Natural killer cell (primary cell): ENCODE measurements at regions of chr1 and their contacts with region 1.

Region 1: GRCh38 chr1:110460253-110461220 is 9.6 kb downstream of the PROK1 start:
- DNase-seq: peak; percentile 77 to 90
- ATAC-seq: peak; percentile 87 to 99 (median 98)
- H3K4me3 ChIP-seq: no peak overlapping the region
- H3K4me3 Mint-ChIP-seq: no peak overlapping the region
- H3K27ac ChIP-seq: no peak overlapping the region
- H3K27ac Mint-ChIP-seq: no peak overlapping the region
- H3K4me1 ChIP-seq: no peaks in the 10 kb centered on the region
- H3K4me1 Mint-ChIP-seq: no peaks in the 10 kb centered on the region
- H3K27me3 ChIP-seq: no peaks in the 10 kb centered on the region
- H3K27me3 Mint-ChIP-seq: peaks cover 0 to 5% of the 10 kb centered on the region in 2 donors
- CTCF ChIP-seq: peak; percentile 94

Region 2: DNA sequence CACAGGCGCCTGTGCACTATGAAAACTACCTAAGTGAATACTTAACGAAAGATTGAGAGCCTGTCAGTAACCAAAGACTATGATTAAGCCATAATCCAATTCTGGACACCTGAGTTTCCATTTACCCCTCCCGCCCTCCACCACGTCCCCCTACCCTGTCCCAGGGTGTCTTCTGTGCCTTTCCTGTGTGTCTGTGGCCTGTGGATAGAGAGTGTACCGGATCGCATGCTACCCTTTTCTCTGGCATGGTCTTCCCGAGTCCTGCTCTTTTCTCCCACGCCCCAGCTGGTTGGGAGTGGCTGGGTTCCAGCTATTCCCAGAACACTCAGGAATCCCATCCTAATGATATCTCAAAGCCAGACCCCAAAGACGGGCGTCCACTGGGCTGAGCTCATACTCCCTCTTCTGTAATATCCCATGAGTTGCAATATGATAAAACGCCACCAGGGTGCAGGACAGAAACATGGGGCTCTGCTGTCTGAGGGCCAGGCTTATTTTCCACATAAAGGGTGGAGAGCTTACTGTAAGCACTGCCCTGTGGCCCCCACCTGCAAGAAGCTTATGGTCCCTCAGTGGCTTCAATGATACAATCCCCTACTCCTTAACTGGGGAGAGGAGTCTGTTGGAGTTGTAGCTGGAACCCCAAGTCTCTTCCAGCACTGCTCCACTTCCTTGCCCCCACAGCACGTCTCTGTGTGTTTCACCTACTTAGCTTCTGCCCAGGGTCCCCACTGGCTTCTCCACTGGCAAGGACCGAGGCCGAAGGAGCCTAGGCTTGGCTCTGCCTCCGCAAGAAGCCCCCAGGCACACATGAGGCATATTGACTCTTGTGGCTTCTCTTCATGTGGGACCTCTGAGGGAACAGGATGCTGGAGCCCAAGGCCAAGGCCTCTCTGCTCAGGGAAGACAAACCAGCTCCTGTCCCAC is 372.5 kb before region 1 on chr1:
- intact Hi-C with region 1: loop called (anchors 10 kb)
- DNase-seq: peak in 1 of 2 donors; percentile 70
- ATAC-seq: peak; percentile 67 to 77 (median 75)
- H3K4me3 ChIP-seq: no peak overlapping the region
- H3K4me3 Mint-ChIP-seq: peak overlapping the region; percentile 21
- H3K27ac ChIP-seq: no peak overlapping the region
- H3K27ac Mint-ChIP-seq: no peak overlapping the region
- H3K4me1 ChIP-seq: peaks cover 13% of the 10 kb centered on the region
- H3K4me1 Mint-ChIP-seq: peaks cover 14 to 18% of the 10 kb centered on the region in 2 donors
- H3K27me3 ChIP-seq: peaks cover 13% of the 10 kb centered on the region
- H3K27me3 Mint-ChIP-seq: peaks cover 37 to 59% of the 10 kb centered on the region in 2 donors
- CTCF ChIP-seq: peak; percentile 53

Region 3: DNA sequence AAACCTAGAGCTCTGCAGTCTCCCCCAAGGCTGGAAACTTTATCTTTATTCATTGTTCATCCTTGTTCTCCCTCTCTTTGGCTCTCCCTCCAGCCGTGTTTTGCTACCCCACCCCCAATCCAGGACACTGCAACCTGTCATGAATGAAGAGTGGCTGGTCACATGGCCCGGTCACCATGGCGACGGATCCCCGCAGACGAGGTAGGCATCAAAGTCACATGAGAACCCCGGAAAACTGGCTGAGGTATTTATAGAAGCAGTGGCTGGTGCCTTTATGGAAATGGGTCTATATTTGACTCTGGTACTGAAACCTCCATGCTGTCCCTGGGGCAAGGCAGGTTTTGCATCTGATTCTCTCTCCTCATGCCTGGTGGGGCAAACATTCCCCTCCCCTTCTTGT is 323.6 kb before region 1 on chr1:
- intact Hi-C with region 1: no loop called
- DNase-seq: peak in 1 of 2 donors; percentile 43
- ATAC-seq: no peak
- H3K4me3 ChIP-seq: no peak overlapping the region
- H3K4me3 Mint-ChIP-seq: no peak overlapping the region
- H3K27ac ChIP-seq: no peak overlapping the region
- H3K27ac Mint-ChIP-seq: no peak overlapping the region
- H3K4me1 ChIP-seq: no peaks in the 10 kb centered on the region
- H3K4me1 Mint-ChIP-seq: peaks cover 0 to 10% of the 10 kb centered on the region in 2 donors
- H3K27me3 ChIP-seq: no peaks in the 10 kb centered on the region
- H3K27me3 Mint-ChIP-seq: peaks cover 46 to 49% of the 10 kb centered on the region in 2 donors
- CTCF ChIP-seq: no peak

Region 4: DNA sequence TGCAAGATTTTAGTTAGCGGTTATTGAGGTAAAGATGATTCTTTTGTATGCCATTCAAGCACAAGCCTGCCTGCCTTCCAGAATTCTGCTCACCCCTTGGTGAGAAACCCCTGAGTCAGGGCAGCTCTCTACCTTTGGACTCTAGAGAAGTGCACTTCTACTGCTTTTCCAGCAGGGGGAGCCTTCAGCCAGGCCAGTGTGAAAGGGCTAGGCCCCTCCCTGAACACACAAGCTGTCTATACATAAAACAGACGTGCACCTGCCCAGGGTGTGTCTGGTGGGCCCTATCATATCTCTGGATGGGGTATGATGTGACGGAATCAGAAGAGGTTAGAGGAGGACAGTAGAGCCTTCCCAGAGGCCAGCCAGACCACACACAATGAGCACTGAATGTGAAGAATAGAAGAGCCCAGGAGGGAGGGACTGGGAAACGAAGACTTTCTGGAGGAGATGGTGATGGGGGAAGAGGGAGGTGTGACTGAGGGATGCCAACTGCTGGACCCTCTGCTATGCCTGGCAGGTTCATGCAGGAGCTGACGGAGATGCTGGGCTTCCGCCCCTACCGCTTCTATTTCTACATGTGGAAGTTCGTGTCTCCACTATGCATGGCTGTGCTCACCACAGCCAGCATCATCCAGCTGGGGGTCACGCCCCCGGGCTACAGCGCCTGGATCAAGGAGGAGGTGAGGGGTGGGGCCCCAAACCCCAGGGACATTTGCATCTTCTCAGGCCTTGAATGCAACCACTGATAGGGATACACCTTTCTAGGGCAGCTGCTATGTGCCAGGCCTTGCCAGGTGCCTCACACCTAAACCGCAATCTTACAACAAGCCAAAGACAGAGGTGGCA is 263.4 kb before region 1 on chr1:
- intact Hi-C with region 1: loop called (anchors 1 kb)
- DNase-seq: peak in 1 of 2 donors; percentile 70
- ATAC-seq: peak; percentile 80 to 100 (median 94)
- H3K4me3 ChIP-seq: no peak overlapping the region
- H3K4me3 Mint-ChIP-seq: no peak overlapping the region
- H3K27ac ChIP-seq: no peak overlapping the region
- H3K27ac Mint-ChIP-seq: no peak overlapping the region
- H3K4me1 ChIP-seq: no peaks in the 10 kb centered on the region
- H3K4me1 Mint-ChIP-seq: peaks cover 4 to 5% of the 10 kb centered on the region in 2 donors
- H3K27me3 ChIP-seq: no peaks in the 10 kb centered on the region
- H3K27me3 Mint-ChIP-seq: no peaks in the 10 kb centered on the region
- CTCF ChIP-seq: peak; percentile 90

Region 5: DNA sequence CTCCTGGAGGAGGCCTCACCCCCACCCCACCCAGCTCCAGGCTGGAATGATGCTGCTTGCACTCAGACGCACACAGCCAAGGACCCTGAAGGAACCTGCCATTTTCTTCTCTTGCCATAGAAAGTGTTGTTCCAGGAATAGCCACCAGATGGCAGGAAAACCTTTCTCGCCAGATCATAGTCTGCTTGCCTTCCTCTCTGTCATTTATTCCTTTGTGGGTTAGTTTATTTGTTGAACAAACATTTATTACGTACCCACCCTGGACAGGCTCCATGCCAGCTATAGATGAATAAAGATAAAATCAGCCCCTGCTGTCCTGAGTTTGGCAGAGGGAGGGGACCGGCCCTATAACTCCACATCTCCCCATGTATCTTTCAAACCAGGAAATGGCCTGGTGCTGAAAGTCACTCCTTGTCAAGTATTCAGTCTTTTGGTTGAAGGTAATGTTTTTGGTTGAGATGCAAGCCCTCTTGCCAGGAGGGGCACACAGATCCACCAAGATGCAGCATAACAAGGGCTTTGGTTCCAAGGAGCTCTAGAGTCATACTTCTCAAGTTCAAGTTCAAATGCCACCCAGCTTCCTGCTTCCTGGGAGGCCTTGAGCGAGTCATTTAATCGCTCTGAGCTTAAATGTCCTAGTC is 257.4 kb before region 1 on chr1:
- intact Hi-C with region 1: loop called (anchors 1 kb)
- DNase-seq: peak; percentile 37 to 90
- ATAC-seq: peak; percentile 63 to 77 (median 68)
- H3K4me3 ChIP-seq: no peak overlapping the region
- H3K4me3 Mint-ChIP-seq: no peak overlapping the region
- H3K27ac ChIP-seq: no peak overlapping the region
- H3K27ac Mint-ChIP-seq: no peak overlapping the region
- H3K4me1 ChIP-seq: peaks cover 13% of the 10 kb centered on the region
- H3K4me1 Mint-ChIP-seq: peaks cover 5 to 15% of the 10 kb centered on the region in 2 donors
- H3K27me3 ChIP-seq: no peaks in the 10 kb centered on the region
- H3K27me3 Mint-ChIP-seq: no peaks in the 10 kb centered on the region
- CTCF ChIP-seq: peak; percentile 90

Region 6: DNA sequence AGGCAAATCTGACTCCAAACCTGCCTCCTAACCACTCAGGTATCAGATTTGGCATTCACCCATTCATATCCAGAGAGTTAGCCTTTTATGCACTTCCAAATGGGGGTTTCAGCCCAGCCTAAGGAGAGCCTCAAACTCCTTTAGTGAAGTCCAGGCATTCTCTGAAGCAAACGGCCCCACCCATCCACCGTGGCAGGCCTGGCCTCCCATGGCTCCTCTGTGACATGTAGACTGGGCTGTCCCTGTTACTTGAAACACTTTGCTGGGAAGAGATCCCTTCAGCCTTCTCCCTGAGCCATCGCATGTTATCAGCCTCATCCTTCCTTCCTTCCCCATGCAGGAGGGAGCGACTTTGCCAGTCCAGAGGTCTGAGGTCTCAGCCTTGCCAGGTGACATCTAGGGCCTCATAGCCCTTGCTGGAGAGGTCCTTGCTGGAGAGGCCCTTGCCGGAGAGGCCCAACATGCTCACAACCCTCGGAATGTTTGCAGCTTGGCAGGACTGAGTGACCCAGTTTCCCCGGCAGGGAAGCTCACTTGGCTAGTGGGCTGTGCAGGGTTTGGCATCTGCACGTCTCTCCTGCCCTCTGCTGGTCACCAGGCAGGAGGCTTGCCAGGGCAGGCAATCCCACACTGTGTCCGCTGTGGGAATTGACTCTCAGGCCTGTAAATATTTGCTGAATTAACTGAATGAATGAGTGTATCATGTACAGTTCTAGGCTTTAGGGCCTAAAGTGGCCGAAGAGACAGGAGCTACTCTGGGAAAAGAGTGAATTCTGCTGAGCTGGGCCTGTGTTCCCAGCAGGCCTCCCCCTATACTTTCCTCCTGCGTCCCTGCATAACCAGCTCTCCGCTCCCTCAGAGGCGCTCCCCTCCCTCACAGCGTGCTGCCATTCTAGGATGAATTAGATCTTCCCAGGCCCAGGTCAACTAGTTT is 148.1 kb before region 1 on chr1:
- intact Hi-C with region 1: loop called (anchors 2 kb)
- DNase-seq: peak; percentile 57 to 87
- ATAC-seq: peak; percentile 85 to 98 (median 98)
- H3K4me3 ChIP-seq: no peak overlapping the region
- H3K4me3 Mint-ChIP-seq: no peak overlapping the region
- H3K27ac ChIP-seq: no peak overlapping the region
- H3K27ac Mint-ChIP-seq: no peak overlapping the region
- H3K4me1 ChIP-seq: peaks cover 4% of the 10 kb centered on the region
- H3K4me1 Mint-ChIP-seq: no peaks in the 10 kb centered on the region
- H3K27me3 ChIP-seq: no peaks in the 10 kb centered on the region
- H3K27me3 Mint-ChIP-seq: no peaks in the 10 kb centered on the region
- CTCF ChIP-seq: peak; percentile 93

Region 7: GRCh38 chr1:110412576-110412975 is 48.0 kb before region 1 on chr1:
- intact Hi-C with region 1: loop called (anchors 1 kb)
- DNase-seq: peak; percentile 38 to 78
- ATAC-seq: peak; percentile 38 to 55 (median 54)
- H3K4me3 ChIP-seq: no peak overlapping the region
- H3K4me3 Mint-ChIP-seq: no peak overlapping the region
- H3K27ac ChIP-seq: no peak overlapping the region
- H3K27ac Mint-ChIP-seq: no peak overlapping the region
- H3K4me1 ChIP-seq: peaks cover 9% of the 10 kb centered on the region
- H3K4me1 Mint-ChIP-seq: peaks cover 12 to 13% of the 10 kb centered on the region in 2 donors
- H3K27me3 ChIP-seq: no peaks in the 10 kb centered on the region
- H3K27me3 Mint-ChIP-seq: no peaks in the 10 kb centered on the region
- CTCF ChIP-seq: peak; percentile 63